HAP-1 (cell line): ENCODE measurements at regions of chr16 and their contacts with region 1.

Region 1: GRCh38 chr16:180938-181667 is 844 bp downstream of the HBQ1 start:
- DNase-seq: peak; percentile 82 to 92
- H3K4me3 ChIP-seq: peak overlapping the region; percentile 50
- H3K4me1 ChIP-seq: peaks cover 4% of the 10 kb centered on the region
- H3K27me3 ChIP-seq: no peaks in the 10 kb centered on the region

Region 2: GRCh38 chr16:65671-66137 is 115.4 kb before region 1 on chr16:
- in situ Hi-C with region 1: no loop called
- DNase-seq: peak; percentile 47 to 90
- H3K4me3 ChIP-seq: no peak overlapping the region
- H3K4me1 ChIP-seq: no peaks in the 10 kb centered on the region
- H3K27me3 ChIP-seq: no peaks in the 10 kb centered on the region

Region 3: DNA sequence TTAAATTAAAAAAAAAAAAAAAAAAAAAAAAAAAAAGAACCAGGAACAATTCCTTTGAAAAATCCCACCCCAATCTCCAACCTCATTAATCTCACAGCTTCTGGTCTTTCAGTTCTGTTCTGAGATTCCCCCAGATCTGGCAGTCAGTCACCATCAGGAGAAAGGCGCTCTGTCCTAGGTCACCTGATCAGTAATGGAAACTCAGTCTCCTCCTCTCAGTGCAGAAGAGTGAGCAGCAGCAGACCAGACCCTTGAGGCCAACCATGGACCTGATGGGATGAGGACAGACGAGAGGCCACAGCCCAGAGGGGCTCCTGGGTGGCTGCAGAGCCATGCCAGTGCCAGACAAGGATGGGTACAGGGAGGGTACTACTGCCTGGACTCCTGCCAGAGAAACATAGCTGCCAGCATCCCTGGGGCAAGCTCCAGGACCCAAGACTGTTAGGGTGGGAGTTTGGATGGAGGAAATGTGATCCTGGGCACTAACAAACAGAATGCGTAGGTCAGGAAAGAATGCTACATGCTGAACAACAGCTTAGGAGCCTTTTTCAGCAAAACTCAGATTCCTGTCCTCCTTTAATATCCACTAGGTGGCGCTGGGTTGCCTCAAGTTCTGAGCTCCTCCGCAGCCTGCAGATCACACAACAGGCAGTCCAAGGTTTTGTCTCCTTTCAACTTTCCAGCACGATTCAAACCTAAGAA is 74.3 kb before region 1 on chr16:
- in situ Hi-C with region 1: loop called (anchors 5 kb)
- DNase-seq: peak; percentile 74
- H3K4me3 ChIP-seq: no peak overlapping the region
- H3K4me1 ChIP-seq: no peaks in the 10 kb centered on the region
- H3K27me3 ChIP-seq: no peaks in the 10 kb centered on the region

Region 4: DNA sequence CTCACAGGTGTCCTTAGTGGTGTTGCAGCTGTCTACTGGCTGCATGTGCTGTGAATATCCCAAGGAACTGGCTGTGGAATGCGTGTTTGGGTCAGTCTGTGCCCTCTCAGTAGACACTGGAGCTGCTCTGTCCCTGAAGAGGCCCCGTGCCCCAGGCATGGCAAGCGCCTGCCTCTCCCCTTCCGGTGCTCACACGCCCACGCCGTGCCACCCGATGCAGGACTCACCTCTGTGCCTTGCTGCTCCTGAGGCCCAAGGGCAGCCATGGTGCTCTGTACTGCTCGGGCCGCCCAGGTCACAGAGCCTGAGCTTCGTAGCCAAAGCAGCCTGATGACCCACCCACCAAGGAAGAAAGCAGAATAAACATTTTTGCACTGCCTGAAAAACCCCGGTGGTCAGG is 84.6 kb after region 1 on chr16:
- in situ Hi-C with region 1: no loop called
- DNase-seq: no peak
- H3K4me3 ChIP-seq: no peak overlapping the region
- H3K4me1 ChIP-seq: no peaks in the 10 kb centered on the region
- H3K27me3 ChIP-seq: no peaks in the 10 kb centered on the region